Activated CD8-positive, alpha-beta T cell treated with anti-CD3 and anti-CD28 coated beads for 36 hours (primary cell): ENCODE measurements at regions of chr9 and their contacts with region 1.

Region 1: GRCh38 chr9:129726322-129727160 is 26.3 kb downstream of the PTGES start:
- DNase-seq: peak; percentile 73
- ATAC-seq: peak; percentile 99
- H3K4me3 Mint-ChIP-seq: peak overlapping the region; percentile 37
- H3K27ac Mint-ChIP-seq: no peak overlapping the region
- H3K4me1 Mint-ChIP-seq: peaks cover 2% of the 10 kb centered on the region
- H3K27me3 Mint-ChIP-seq: peaks cover 4% of the 10 kb centered on the region
- CTCF ChIP-seq: peak; percentile 98

Region 2: GRCh38 chr9:129422843-129423192 is 303.7 kb before region 1 on chr9:
- CTCF ChIA-PET with region 1: no interaction called
- POLR2A ChIA-PET with region 1: no interaction called
- intact Hi-C with region 1: no loop called
- DNase-seq: no peak
- ATAC-seq: peak; percentile 47
- H3K4me3 Mint-ChIP-seq: no peak overlapping the region
- H3K27ac Mint-ChIP-seq: peak overlapping the region; percentile 35
- H3K4me1 Mint-ChIP-seq: peaks cover 11% of the 10 kb centered on the region
- H3K27me3 Mint-ChIP-seq: no peaks in the 10 kb centered on the region
- CTCF ChIP-seq: no peak

Region 3: DNA sequence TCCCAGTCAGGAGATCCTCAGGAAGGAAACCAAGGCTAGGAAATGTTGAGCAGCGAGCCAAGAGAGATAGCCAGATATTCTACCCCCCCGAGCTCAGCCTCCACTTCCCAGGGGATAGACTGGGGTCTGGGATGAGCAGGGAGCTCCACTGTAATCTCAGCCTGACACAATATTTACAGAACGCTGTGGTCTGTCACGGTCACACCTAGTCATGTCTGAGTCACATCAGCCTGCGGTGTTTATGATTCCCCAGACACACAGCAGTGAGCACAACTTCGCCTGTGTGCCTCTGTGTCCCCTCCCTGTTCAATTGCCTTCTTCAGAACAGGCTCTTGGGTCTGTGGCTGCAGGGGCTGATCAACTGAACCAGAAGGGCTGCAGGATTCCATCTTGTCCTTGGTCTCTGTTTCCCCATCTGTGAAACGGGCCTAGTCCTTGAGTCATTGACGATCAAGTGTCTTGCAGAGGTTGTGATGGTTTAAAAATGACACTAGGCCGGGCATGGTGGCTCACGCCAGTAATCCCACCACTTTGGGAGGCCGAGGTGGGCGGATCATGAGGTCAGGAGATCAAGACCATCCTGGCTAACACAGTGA is 69.6 kb before region 1 on chr9:
- CTCF ChIA-PET with region 1: interaction called, 11 read pairs
- POLR2A ChIA-PET with region 1: no interaction called
- intact Hi-C with region 1: no loop called
- DNase-seq: no peak
- ATAC-seq: peak; percentile 51
- H3K4me3 Mint-ChIP-seq: no peak overlapping the region
- H3K27ac Mint-ChIP-seq: no peak overlapping the region
- H3K4me1 Mint-ChIP-seq: no peaks in the 10 kb centered on the region
- H3K27me3 Mint-ChIP-seq: no peaks in the 10 kb centered on the region
- CTCF ChIP-seq: no peak

Region 4: GRCh38 chr9:129702589-129703520 is 23.7 kb before region 1 on chr9:
- CTCF ChIA-PET with region 1: interaction called, 17 read pairs
- POLR2A ChIA-PET with region 1: no interaction called
- intact Hi-C with region 1: no loop called
- DNase-seq: no peak
- ATAC-seq: no peak
- H3K4me3 Mint-ChIP-seq: no peak overlapping the region
- H3K27ac Mint-ChIP-seq: no peak overlapping the region
- H3K4me1 Mint-ChIP-seq: peaks cover 2% of the 10 kb centered on the region
- H3K27me3 Mint-ChIP-seq: peaks cover 12% of the 10 kb centered on the region
- CTCF ChIP-seq: no peak

Region 5: DNA sequence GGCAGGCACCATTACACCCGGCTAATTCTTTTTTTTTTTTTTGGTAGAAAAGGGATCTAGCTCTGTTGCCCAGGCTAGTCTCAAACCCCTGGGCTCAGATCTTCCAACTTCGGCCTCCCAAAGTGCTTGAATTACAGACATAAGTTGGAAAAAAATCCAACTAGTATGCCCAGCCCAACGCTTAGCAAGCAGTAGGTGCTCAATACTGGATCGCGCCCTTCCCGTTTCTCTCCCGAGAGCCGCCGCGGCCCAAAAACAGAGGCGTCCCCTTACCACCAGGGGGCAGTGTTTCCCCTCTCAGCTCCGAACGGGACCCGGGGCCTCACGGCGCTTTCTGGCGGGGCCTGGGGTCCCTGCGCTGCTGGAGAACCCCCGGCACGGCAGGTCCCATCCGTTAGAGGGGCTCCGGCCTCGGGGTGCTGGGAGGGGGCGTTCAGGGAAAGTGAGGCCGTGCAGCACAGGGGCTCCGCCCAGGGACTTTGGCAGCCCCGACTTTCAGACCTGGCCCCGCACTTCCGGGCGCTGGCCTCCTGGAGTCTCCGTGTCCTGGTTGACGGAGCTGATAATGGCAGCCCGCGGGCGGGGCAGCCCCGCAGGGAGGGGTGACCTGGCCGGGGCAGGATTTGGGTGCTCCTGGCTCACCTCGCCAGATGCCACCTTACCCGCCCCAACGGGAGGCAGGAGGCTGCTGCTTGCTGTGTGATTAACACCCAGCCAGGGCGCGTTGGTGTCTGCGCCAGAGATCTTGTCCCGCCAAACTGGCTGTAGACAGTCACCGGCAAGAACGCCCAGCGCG is 11.1 kb after region 1 on chr9:
- CTCF ChIA-PET with region 1: interaction called, 82 read pairs
- POLR2A ChIA-PET with region 1: no interaction called
- intact Hi-C with region 1: no loop called
- DNase-seq: peak; percentile 89
- ATAC-seq: peak; percentile 89
- H3K4me3 Mint-ChIP-seq: peak overlapping the region; percentile 55
- H3K27ac Mint-ChIP-seq: peak overlapping the region; percentile 52
- H3K4me1 Mint-ChIP-seq: peaks cover 11% of the 10 kb centered on the region
- H3K27me3 Mint-ChIP-seq: no peaks in the 10 kb centered on the region
- CTCF ChIP-seq: peak; percentile 99

Region 6: GRCh38 chr9:129751826-129752801 is 25.6 kb after region 1 on chr9:
- CTCF ChIA-PET with region 1: interaction called, 11 read pairs
- POLR2A ChIA-PET with region 1: no interaction called
- intact Hi-C with region 1: no loop called
- DNase-seq: no peak
- ATAC-seq: peak; percentile 11
- H3K4me3 Mint-ChIP-seq: peak overlapping the region; percentile 26
- H3K27ac Mint-ChIP-seq: no peak overlapping the region
- H3K4me1 Mint-ChIP-seq: peaks cover 14% of the 10 kb centered on the region
- H3K27me3 Mint-ChIP-seq: peaks cover 6% of the 10 kb centered on the region
- CTCF ChIP-seq: no peak

Region 7: DNA sequence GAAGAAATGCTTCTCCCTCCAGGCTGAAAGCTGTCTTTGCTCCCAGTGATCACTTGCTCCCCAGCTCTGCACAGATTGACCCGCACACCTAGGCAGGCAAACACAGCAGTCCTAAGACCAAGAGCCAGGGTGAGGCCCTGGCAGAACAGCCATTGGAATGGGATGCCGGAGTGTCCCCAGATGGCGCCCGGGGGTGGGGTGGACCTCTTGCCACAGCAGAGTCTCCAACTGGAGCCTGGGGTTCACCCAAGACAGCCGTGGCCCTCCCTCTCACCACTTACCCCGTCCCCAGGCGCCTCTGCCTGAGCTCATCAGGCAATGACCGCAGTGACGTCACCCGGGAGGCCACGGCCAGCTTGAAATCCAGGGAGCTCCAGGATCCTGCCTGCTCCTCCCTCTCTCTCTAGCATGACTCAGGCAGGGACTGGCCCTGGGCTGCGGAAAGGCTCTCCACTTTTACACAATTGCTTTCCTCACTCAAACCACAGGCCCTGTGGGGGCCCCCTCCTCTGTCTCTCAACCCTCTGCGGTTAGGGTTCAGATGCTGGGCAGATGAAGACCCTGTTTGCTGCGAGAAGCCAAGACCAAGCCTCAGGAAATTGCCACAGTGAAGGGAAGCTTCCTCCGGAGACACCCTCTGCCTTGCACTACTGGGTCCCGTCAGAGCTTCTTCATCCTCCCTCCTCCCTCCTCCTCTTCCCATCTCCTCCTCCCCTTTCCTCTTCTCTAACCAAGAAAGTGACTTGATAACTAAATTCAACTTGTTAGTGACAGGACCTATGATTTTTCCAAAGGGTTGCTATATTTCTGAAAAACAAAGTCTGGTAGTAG is 50.6 kb after region 1 on chr9:
- CTCF ChIA-PET with region 1: interaction called, 68 read pairs
- POLR2A ChIA-PET with region 1: interaction called, 4 read pairs
- intact Hi-C with region 1: no loop called
- DNase-seq: peak; percentile 91
- ATAC-seq: peak; percentile 83
- H3K4me3 Mint-ChIP-seq: no peak overlapping the region
- H3K27ac Mint-ChIP-seq: no peak overlapping the region
- H3K4me1 Mint-ChIP-seq: peaks cover 15% of the 10 kb centered on the region
- H3K27me3 Mint-ChIP-seq: peaks cover 6% of the 10 kb centered on the region
- CTCF ChIP-seq: no peak